ENCODE measurements at regions of chr11 and their contacts with region 1.

Region 1: GRCh38 chr11:129117595-129118350 is 74.4 kb downstream of the ARHGAP32 start:
- DNase-seq: peak; percentile 36 to 52 (median 42)
- ATAC-seq: peak; percentile 65
- H3K4me3 ChIP-seq: no peak overlapping the region
- H3K27ac ChIP-seq: no peak overlapping the region
- H3K4me1 ChIP-seq: peaks cover 9% of the 10 kb centered on the region
- H3K27me3 ChIP-seq: no peaks in the 10 kb centered on the region
- CTCF ChIP-seq: peak; percentile 71 to 96 (median 88)
- POLR2A ChIP-seq: no peak

Region 2: GRCh38 chr11:128695539-128696221 is 422.1 kb before region 1 on chr11:
- intact Hi-C with region 1: no loop called
- DNase-seq: peak in 1 of 4 donors; percentile 80
- ATAC-seq: no peak
- H3K4me3 ChIP-seq: no peak overlapping the region
- H3K27ac ChIP-seq: peak overlapping the region in 2 of 4 donors; percentile 60 to 81
- H3K4me1 ChIP-seq: peaks cover 27% of the 10 kb centered on the region
- H3K27me3 ChIP-seq: peaks cover 0 to 17% of the 10 kb centered on the region in 2 donors
- CTCF ChIP-seq: no peak
- POLR2A ChIP-seq: peak in 1 of 3 donors; percentile 38

Region 3: GRCh38 chr11:128848815-128849455 is 268.8 kb before region 1 on chr11:
- intact Hi-C with region 1: no loop called
- DNase-seq: peak; percentile 37 to 75 (median 62)
- ATAC-seq: no peak
- H3K4me3 ChIP-seq: no peak overlapping the region
- H3K27ac ChIP-seq: no peak overlapping the region
- H3K4me1 ChIP-seq: peaks cover 30% of the 10 kb centered on the region
- H3K27me3 ChIP-seq: no peaks in the 10 kb centered on the region
- CTCF ChIP-seq: peak; percentile 33 to 62 (median 53)
- POLR2A ChIP-seq: no peak

Region 4: DNA sequence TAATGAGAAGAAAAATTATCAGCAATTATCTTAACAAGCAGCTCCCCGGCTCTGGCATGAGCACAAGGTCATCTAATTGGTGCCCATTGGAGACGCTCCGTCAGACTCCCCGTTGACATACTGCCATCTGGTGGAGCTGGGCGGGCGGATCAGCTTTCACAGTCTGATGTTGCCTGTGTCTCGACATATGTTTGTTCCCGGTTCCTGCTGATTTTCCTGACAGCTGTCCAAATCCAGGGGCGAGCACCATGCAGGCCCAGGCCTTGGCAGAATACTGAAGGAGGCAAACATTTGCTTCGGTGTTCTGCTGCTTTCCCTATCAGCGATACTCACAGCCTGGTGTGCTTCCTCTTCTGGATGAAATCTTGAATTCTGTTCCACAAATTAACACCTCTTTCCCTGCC is 214.1 kb after region 1 on chr11:
- intact Hi-C with region 1: loop called (anchors 5 kb)
- DNase-seq: peak; percentile 89 to 93 (median 91)
- ATAC-seq: peak; percentile 95
- H3K4me3 ChIP-seq: no peak overlapping the region
- H3K27ac ChIP-seq: peak overlapping the region in 2 of 4 donors; percentile 38 to 47
- H3K4me1 ChIP-seq: peaks cover 6% of the 10 kb centered on the region
- H3K27me3 ChIP-seq: no peaks in the 10 kb centered on the region
- CTCF ChIP-seq: peak; percentile 69 to 95 (median 92)
- POLR2A ChIP-seq: no peak